ENCODE measurements at regions of chr9 and their contacts with region 1.

Region 1: DNA sequence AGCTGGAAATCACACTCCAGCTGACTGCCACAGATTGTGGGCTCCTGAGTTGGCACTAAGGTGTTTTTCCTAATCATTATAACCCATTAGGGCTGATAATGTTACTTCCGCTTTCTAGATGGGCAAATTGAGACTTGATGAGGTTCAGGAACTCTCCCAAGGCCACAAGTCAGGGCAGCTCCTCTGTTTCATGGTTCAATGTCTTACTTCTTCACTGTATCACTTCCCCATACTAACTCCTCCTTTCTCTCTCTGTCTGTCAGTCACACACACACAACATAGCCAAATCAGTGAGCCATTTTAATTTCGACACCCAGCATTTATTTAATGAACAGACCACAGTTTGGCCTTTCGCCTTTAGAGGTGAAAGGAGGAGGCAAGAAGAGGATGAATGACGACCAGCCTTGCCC is 17.8 kb upstream of the TRAF1 start:
- DNase-seq: no peak
- ATAC-seq: no peak
- H3K4me3 ChIP-seq: no peak overlapping the region
- H3K27ac ChIP-seq: no peak overlapping the region
- H3K4me1 ChIP-seq: peaks cover 4% of the 10 kb centered on the region
- H3K27me3 ChIP-seq: no peaks in the 10 kb centered on the region

Region 2: DNA sequence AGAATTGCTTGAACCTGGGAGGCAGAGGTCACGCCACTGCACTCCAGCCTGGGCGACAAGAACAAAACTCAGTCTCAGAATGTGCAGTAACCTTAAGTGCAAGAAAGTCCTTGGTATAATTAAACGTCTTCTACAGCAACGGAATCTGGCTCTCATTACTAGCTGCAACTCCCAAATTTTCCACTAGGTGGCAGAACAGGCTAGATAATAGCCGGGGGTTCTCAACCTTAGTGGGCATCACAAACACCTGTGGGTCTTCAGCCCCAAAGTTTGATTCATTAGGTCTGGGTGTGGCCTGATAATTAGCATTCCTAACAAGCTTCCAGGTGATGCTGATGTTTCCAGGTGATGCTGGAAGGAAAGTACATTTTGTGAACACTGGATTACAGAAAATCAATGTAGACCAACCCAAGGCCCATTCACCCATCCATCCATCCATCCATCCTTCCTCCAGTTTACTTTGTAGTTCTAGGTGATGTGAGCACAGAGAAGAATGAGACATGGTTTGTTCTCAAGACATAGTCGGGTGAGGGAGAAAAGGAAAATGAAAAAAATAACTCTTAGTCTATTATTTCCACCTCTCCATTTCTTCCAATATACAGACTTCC is 188.5 kb before region 1 on chr9:
- intact Hi-C with region 1: loop called in 3 of 4 experiments (anchors 5 to 10 kb)
- DNase-seq: peak in 1 of 3 donors; percentile 56
- ATAC-seq: peak; percentile 59 to 68
- H3K4me3 ChIP-seq: no peak overlapping the region
- H3K27ac ChIP-seq: no peak overlapping the region
- H3K4me1 ChIP-seq: no peaks in the 10 kb centered on the region
- H3K27me3 ChIP-seq: no peaks in the 10 kb centered on the region

Region 3: DNA sequence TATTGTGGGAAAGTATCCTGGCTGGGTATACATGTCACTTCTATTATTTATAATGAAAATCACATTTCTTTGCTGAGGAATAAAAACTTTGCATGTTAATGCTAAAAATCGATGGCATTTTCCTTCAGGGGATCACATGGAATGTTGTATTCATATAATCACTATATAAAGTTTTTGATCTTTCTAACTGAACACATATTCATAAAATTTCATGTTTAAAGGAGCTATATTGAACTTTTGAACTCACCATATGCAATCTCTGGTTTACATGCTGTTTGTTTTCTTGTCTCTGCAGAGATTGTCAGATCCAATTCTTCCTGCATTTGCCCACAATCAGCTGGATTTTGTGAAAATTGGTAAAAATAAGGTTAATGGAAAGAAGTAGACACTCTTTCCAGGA is 15.6 kb after region 1 on chr9:
- intact Hi-C with region 1: no loop called
- DNase-seq: no peak
- ATAC-seq: no peak
- H3K4me3 ChIP-seq: no peak overlapping the region
- H3K27ac ChIP-seq: no peak overlapping the region
- H3K4me1 ChIP-seq: no peaks in the 10 kb centered on the region
- H3K27me3 ChIP-seq: no peaks in the 10 kb centered on the region

Measured in right cardiac atrium (tissue), 5 donors.